ENCODE measurements at regions of chr15 and their contacts with region 1.

Region 1: GRCh38 chr15:56491110-56491722 is 26.3 kb upstream of the MNS1 start:
- DNase-seq: no peak

Region 2: GRCh38 chr15:57306161-57306943 is 815.1 kb after region 1 on chr15:
- intact Hi-C with region 1: loop called (anchors 5 kb)
- DNase-seq: peak; percentile 94

Measured in cardiac septum (tissue), 1 donor.